OCI-LY7 (cell line): ENCODE measurements at regions of chr13 and their contacts with region 1.

Region 1: DNA sequence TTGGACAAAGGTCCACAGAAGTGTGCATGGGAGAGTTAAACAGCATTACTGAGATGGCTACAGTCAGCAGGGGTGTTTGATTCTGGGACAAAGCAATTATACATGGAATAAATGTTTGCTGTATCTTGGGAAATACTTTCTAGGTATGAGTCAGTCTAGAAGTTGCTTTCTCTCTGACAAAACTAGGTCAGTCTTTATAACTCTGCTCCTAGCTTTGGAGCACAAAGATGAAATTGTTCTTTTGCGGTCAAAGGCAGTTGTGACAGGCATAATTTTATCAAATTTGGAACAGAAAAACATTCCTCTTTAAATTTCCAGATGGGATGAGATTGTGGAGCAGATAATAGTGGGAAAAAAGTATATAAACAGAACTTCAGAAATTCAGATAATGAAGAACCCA is 1045.4 kb upstream of the MIR17HG start:
- DNase-seq: no peak
- H3K4me3 ChIP-seq: no peak overlapping the region
- H3K27ac ChIP-seq: no peak overlapping the region
- H3K4me1 ChIP-seq: no peaks in the 10 kb centered on the region
- CTCF ChIP-seq: no peak

Region 2: DNA sequence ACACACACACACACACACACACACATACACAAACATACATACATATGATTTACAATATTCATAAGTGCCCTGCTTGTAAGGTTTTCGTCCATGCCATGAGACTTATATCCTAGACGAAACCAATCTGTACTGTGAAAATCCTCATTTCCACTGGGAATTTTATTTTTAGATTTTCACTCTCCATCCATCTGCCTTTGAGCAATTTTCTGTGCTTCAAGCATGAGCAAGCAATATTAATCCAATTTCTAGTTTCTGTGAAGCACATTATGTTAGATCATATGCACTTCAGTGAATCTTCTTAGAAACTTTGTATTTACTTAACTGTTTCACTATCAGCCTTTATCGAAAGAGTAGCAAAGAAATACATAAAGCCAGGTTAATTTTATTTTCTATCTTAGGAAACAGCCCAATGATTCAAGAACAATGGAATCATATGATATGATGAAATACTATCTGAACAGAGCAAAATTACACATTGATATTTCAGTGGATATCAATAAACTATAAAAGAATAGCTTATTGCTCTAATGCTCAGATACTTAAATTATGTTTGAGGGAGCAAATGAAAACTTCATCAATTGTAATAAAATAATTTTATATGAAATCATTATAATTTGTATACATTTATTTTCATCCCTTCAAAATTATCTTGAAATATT is 55.3 kb before region 1 on chr13:
- CTCF ChIA-PET with region 1: no interaction called
- POLR2A ChIA-PET with region 1: interaction called, 11 read pairs
- intact Hi-C with region 1: no loop called
- DNase-seq: no peak
- H3K4me3 ChIP-seq: no peak overlapping the region
- H3K27ac ChIP-seq: no peak overlapping the region
- H3K4me1 ChIP-seq: no peaks in the 10 kb centered on the region
- CTCF ChIP-seq: no peak